ENCODE measurements at regions of chr6 and their contacts with region 1.

Region 1: DNA sequence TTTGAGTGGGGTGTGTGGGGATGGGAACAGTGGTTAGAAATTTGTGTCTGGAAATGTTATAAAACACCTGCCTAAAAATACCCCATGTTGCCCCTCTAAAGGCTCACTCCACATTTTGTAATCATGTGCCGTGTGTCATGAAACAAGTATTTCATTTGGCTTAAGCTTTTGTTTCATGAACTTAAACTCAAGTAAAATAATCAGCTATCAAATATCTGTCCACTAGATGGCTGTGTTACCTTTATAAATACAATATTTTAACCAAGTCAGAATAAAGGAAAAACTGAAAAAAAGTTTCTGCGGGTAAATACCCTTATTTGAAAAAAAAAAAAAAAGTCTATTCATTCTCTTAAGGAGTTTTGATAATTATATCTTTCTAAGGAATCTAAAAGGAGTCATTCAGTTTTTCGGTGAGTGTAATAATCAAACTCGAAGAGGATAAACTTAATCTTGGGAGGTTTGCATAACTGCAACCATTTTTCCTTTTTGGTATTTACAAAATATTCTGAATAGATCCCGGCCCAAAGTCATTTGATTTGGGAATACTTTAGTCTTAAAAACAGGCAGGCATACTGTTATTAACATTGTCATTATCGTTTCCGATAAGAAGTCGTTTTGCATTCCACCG is 29.9 kb upstream of the MTRF1L start:
- DNase-seq: no peak
- H3K4me3 ChIP-seq: peak overlapping the region in 1 of 2 donors; percentile 37
- H3K27ac ChIP-seq: peak overlapping the region in 1 of 2 donors; percentile 59
- H3K4me1 ChIP-seq: peaks cover under 1 to 4% of the 10 kb centered on the region in 2 donors
- H3K27me3 ChIP-seq: no peaks in the 10 kb centered on the region
- CTCF ChIP-seq: peak; percentile 45 to 60 (median 47)

Region 2: DNA sequence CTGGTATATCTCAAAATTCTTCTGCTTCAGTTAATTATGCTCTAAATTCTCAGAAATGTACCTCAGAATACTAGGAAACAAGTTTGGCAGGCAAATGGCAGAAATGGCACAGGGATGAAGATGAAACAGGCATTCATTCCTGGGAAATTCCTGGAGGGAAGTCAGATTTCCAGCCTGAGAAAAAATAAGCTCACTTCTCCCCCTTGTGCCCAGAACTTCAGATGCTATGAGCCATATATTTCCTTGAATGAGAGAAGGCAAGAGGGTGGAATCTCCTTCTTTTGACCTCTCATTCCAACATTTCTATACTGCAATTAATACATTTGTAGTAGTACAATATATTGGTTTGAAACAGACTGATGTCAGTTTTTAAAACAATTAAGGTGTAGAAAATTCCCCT is 75.9 kb after region 1 on chr6:
- intact Hi-C with region 1: loop called (anchors 1 kb)
- DNase-seq: no peak
- H3K4me3 ChIP-seq: no peak overlapping the region
- H3K27ac ChIP-seq: no peak overlapping the region
- H3K4me1 ChIP-seq: peaks cover 0 to 18% of the 10 kb centered on the region in 2 donors
- H3K27me3 ChIP-seq: no peaks in the 10 kb centered on the region
- CTCF ChIP-seq: peak; percentile 10 to 68 (median 46)

Region 3: GRCh38 chr6:153231048-153231646 is 198.8 kb after region 1 on chr6:
- intact Hi-C with region 1: loop called (anchors 5 kb)
- DNase-seq: peak in 1 of 2 donors; percentile 78
- H3K4me3 ChIP-seq: no peak overlapping the region
- H3K27ac ChIP-seq: no peak overlapping the region
- H3K4me1 ChIP-seq: no peaks in the 10 kb centered on the region
- H3K27me3 ChIP-seq: no peaks in the 10 kb centered on the region
- CTCF ChIP-seq: peak; percentile 74 to 88 (median 83)

Region 4: DNA sequence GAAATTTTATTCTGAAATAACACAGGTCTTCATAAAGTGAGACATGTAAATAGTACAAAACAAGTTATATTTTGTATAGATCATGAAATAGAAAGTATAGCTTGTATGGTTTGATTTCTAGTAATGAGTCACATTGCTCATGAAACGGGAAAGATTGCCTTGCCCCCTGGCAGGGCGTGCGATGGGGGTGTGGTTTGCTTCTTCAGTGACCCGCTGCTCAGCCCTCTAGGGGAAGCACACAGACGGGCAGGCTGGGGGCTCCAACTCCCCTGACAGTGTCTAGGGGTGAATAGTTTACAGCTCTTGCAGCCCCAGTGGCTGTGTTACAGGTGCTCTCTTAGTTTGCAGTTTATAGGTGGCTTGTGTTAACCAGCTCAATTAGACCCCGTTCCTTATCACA is 269.2 kb after region 1 on chr6:
- intact Hi-C with region 1: loop called (anchors 10 kb)
- DNase-seq: no peak
- H3K4me3 ChIP-seq: no peak overlapping the region
- H3K27ac ChIP-seq: no peak overlapping the region
- H3K4me1 ChIP-seq: no peaks in the 10 kb centered on the region
- H3K27me3 ChIP-seq: no peaks in the 10 kb centered on the region
- CTCF ChIP-seq: no peak

Region 5: DNA sequence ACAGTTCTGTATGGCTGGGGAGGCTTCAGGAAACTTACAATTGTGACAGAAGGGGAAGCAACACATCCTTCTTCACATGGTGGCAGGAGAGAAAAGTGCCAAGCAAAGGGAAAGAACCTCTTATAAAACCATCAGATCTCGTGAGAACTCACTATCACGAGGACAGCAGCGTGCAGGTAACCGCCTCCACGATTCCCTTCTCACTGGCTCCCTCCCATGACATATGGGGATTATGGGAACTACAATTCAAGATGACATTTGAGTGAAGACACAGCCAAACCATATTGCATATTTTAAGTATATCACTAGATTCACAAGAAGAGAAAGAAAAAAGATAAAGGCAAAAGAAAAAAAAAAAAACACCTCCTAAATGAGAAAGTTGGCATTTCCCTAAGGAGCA is 530.6 kb after region 1 on chr6:
- intact Hi-C with region 1: no loop called
- DNase-seq: no peak
- H3K4me3 ChIP-seq: no peak overlapping the region
- H3K27ac ChIP-seq: no peak overlapping the region
- H3K4me1 ChIP-seq: peaks cover 3 to 12% of the 10 kb centered on the region in 2 donors
- H3K27me3 ChIP-seq: no peaks in the 10 kb centered on the region
- CTCF ChIP-seq: no peak

Region 6: GRCh38 chr6:153787341-153787606 is 754.9 kb after region 1 on chr6:
- intact Hi-C with region 1: loop called (anchors 10 kb)
- DNase-seq: no peak
- H3K4me3 ChIP-seq: no peak overlapping the region
- H3K27ac ChIP-seq: peak overlapping the region in 1 of 2 donors; percentile 70
- H3K4me1 ChIP-seq: peaks cover 0 to 8% of the 10 kb centered on the region in 2 donors
- H3K27me3 ChIP-seq: no peaks in the 10 kb centered on the region
- CTCF ChIP-seq: no peak

Region 7: GRCh38 chr6:153947808-153948447 is 915.6 kb after region 1 on chr6:
- intact Hi-C with region 1: loop called (anchors 5 kb)
- DNase-seq: peak in 1 of 2 donors; percentile 65
- H3K4me3 ChIP-seq: peak overlapping the region in 1 of 2 donors; percentile 11
- H3K27ac ChIP-seq: no peak overlapping the region
- H3K4me1 ChIP-seq: no peaks in the 10 kb centered on the region
- H3K27me3 ChIP-seq: no peaks in the 10 kb centered on the region
- CTCF ChIP-seq: peak; percentile 61 to 95 (median 90)